ENCODE measurements at regions of chr2 and their contacts with region 1.

Region 1: DNA sequence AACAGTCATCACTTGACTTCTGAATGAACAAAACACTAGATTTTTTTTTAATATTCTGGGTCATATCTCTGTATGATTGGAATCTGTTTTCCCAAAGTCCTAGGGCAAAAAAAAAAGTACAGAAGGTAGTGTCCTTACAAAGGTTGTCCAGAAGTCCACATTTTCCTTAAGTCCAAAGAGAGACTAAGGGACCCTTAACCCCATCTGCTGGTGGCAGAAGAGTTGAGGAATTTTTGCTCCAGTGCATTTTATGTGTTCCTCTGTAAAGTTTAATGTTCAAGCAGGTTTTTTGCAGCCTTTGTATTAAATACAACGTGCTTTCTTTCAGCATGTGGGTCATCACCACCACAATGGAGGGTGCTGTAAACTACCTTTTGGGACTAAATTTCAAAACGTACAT is 215.9 kb downstream of the SP3 start:
- DNase-seq: peak; percentile 27
- ATAC-seq: peak; percentile 52; the same call in 1 of the 2 replicates
- H3K4me3 ChIP-seq: no peak overlapping the region
- H3K27ac ChIP-seq: no peak overlapping the region
- H3K4me1 ChIP-seq: no peaks in the 10 kb centered on the region
- H3K27me3 ChIP-seq: no peaks in the 10 kb centered on the region
- CTCF ChIP-seq: peak; percentile 28 to 58 (median 42); a peak in 5 of 6 replicates
- POLR2A ChIP-seq: no peak
- RAD21 ChIP-seq: peak; percentile 77

Region 2: DNA sequence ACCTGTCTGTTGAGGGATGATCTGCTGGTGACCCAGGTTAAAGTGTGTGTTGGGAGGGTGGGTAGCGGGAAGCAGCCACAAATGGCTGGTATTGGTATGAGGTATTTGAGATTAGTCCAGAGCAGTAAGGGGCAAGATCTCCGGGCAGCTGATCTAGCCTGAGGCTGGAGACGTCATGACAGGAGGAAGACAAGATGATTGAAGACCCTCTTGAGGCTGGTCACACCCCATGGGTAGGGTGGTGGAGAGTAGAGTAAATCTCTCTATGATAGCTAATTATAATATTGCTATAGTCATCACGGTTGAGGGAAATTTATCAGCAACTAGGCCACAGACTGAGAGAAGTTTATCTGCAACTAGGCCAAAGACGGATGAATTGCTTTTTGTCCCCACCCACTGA is 266.2 kb before region 1 on chr2:
- CTCF ChIA-PET with region 1: no interaction called
- POLR2A ChIA-PET with region 1: no interaction called
- RAD21 ChIA-PET with region 1: no interaction called
- intact Hi-C with region 1: no loop called
- DNase-seq: no peak
- ATAC-seq: no peak
- H3K4me3 ChIP-seq: no peak overlapping the region
- H3K27ac ChIP-seq: no peak overlapping the region
- H3K4me1 ChIP-seq: no peaks in the 10 kb centered on the region
- H3K27me3 ChIP-seq: no peaks in the 10 kb centered on the region
- CTCF ChIP-seq: no peak
- POLR2A ChIP-seq: no peak
- RAD21 ChIP-seq: no peak

Region 3: GRCh38 chr2:173766537-173767289 is 17.4 kb after region 1 on chr2:
- CTCF ChIA-PET with region 1: no interaction called
- POLR2A ChIA-PET with region 1: no interaction called
- RAD21 ChIA-PET with region 1: no interaction called
- intact Hi-C with region 1: no loop called
- DNase-seq: no peak
- ATAC-seq: no peak
- H3K4me3 ChIP-seq: no peak overlapping the region
- H3K27ac ChIP-seq: no peak overlapping the region
- H3K4me1 ChIP-seq: no peaks in the 10 kb centered on the region
- H3K27me3 ChIP-seq: no peaks in the 10 kb centered on the region
- CTCF ChIP-seq: no peak
- POLR2A ChIP-seq: no peak
- RAD21 ChIP-seq: no peak

Region 4: GRCh38 chr2:174051741-174052583 is 302.6 kb after region 1 on chr2:
- CTCF ChIA-PET with region 1: no interaction called
- POLR2A ChIA-PET with region 1: no interaction called
- RAD21 ChIA-PET with region 1: no interaction called
- intact Hi-C with region 1: loop called (anchors 10 kb)
- DNase-seq: peak; percentile 74
- ATAC-seq: peak; percentile 90
- H3K4me3 ChIP-seq: peak overlapping the region; percentile 4 to 32; a peak in 3 of 4 replicates
- H3K27ac ChIP-seq: peak overlapping the region; percentile 56
- H3K4me1 ChIP-seq: peaks cover 33 to 52% of the 10 kb centered on the region in 2 experiments
- H3K27me3 ChIP-seq: no peaks in the 10 kb centered on the region
- CTCF ChIP-seq: no peak
- POLR2A ChIP-seq: no peak
- RAD21 ChIP-seq: peak; percentile 44; the same call in 1 of the 2 replicates